Caco-2 (cell line): ENCODE measurements at regions of chr7 and their contacts with region 1.

Region 1: DNA sequence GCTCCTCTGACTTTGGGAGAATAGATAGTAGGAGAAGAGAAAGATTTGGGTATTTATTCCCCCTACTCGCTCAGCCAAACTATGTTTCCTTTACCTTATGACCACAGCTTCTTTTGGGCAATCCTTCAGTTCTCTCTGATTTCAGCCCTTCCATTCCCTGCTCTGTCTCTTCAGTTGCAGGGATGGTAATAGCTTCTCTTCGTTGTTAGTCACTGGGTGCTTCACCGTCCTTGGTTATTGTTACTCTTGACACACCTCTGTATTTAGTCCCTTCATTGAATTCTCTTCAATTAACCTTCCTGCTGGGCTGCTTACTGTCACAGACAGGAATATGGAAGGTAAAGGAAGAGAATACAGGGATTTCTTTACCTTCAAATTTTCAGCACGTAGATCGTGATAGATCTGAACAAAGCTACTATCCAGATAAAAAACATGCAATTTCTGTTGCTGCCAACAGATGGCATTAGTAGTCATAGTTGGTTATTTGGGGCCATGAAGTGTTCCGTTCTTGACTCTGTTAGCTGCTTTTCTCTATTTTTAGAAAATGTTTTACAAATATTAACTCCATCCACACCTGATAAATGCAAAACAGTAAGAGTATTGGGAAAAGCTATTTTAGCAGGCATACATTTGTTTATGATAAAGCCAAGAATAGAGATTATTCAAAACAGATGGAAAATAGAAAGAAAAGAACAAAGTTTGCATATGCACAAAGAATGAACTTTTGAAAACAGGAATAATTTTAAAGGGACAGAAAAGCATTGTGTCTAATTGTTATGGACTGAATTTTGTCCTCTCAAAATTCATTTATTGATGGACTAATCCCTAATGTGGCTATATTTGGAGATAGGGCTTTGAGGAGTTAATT is 14.0 kb upstream of the PTTG1IP2 start:
- DNase-seq: peak in 1 of 2 experiments; percentile 42
- H3K4me3 ChIP-seq: no peak overlapping the region
- H3K4me3 Mint-ChIP-seq: peak overlapping the region; percentile 60
- H3K27ac Mint-ChIP-seq: no peak overlapping the region
- H3K4me1 ChIP-seq: 0 out of 2 replicates have a peak, but pooled peaks cover 4% of the 10 kb centered on the region
- H3K4me1 Mint-ChIP-seq: peaks cover 8% of the 10 kb centered on the region
- H3K27me3 ChIP-seq: no peaks in the 10 kb centered on the region
- H3K27me3 Mint-ChIP-seq: peaks cover 8% of the 10 kb centered on the region
- CTCF ChIP-seq: peak; percentile 40 to 75

Region 2: GRCh38 chr7:90495256-90495655 is 39.9 kb after region 1 on chr7:
- CTCF ChIA-PET with region 1: no interaction called
- POLR2A ChIA-PET with region 1: no interaction called
- intact Hi-C with region 1: no loop called
- DNase-seq: peak in 1 of 2 experiments; percentile 16
- H3K4me3 ChIP-seq: no peak overlapping the region
- H3K4me3 Mint-ChIP-seq: no peak overlapping the region
- H3K27ac Mint-ChIP-seq: no peak overlapping the region
- H3K4me1 ChIP-seq: no peaks in the 10 kb centered on the region
- H3K4me1 Mint-ChIP-seq: no peaks in the 10 kb centered on the region
- H3K27me3 ChIP-seq: no peaks in the 10 kb centered on the region
- H3K27me3 Mint-ChIP-seq: peaks cover 9% of the 10 kb centered on the region
- CTCF ChIP-seq: no peak

Region 3: GRCh38 chr7:90520484-90520883 is 65.1 kb after region 1 on chr7:
- CTCF ChIA-PET with region 1: no interaction called
- POLR2A ChIA-PET with region 1: no interaction called
- intact Hi-C with region 1: loop called (anchors 2 kb)
- DNase-seq: no peak
- H3K4me3 ChIP-seq: no peak overlapping the region
- H3K4me3 Mint-ChIP-seq: no peak overlapping the region
- H3K27ac Mint-ChIP-seq: no peak overlapping the region
- H3K4me1 ChIP-seq: no peaks in the 10 kb centered on the region
- H3K4me1 Mint-ChIP-seq: no peaks in the 10 kb centered on the region
- H3K27me3 ChIP-seq: no peaks in the 10 kb centered on the region
- H3K27me3 Mint-ChIP-seq: no peaks in the 10 kb centered on the region
- CTCF ChIP-seq: peak; percentile 17 to 21

Region 4: DNA sequence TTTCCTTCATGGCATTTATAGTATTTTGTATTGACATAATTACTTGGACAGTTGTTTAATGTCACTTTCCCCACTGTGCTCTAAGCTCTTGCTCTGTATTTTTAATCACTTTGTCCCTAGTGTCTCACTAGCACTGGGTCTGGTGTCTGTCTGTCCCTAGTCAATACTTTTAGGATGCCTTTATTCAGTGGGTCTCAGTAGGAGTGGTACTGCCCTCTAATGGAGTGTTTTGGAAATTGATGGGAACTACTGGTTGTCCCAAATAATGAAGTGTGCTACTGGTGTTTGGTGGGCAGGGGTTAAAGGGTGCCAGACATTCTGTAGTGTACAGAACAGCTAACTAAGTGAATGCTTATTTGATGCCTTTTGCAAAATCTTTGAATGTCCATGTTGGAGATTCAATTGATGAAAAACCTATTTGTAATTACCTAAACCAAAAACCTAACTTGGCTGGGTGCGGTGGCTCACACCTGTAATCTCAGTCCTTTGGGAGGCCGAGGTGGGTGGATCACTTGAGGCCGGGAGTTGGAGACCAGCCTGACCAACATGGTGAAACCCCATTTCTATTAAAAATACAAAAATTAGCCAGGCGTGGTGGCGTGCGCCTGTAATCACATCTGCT is 174.0 kb after region 1 on chr7:
- CTCF ChIA-PET with region 1: interaction called, 4 read pairs
- POLR2A ChIA-PET with region 1: no interaction called
- intact Hi-C with region 1: loop called (anchors 1 kb)
- DNase-seq: peak in 1 of 2 experiments; percentile 65
- H3K4me3 ChIP-seq: no peak overlapping the region
- H3K4me3 Mint-ChIP-seq: no peak overlapping the region
- H3K27ac Mint-ChIP-seq: no peak overlapping the region
- H3K4me1 ChIP-seq: peaks cover 22% of the 10 kb centered on the region
- H3K4me1 Mint-ChIP-seq: peaks cover 17% of the 10 kb centered on the region
- H3K27me3 ChIP-seq: no peaks in the 10 kb centered on the region
- H3K27me3 Mint-ChIP-seq: no peaks in the 10 kb centered on the region
- CTCF ChIP-seq: peak; percentile 62 to 71